ENCODE measurements at regions of chr16 and their contacts with region 1.

Region 1: GRCh38 chr16:88791755-88792550 is 6.9 kb upstream of the PIEZO1 start:
- DNase-seq: peak in 1 of 14 experiments; percentile 38
- ATAC-seq: no peak
- H3K4me3 ChIP-seq: no peak overlapping the region
- H3K4me3 Mint-ChIP-seq: peak overlapping the region; percentile 30
- H3K27ac ChIP-seq: peak overlapping the region; percentile 45 to 70
- H3K27ac Mint-ChIP-seq: peak overlapping the region; percentile 86
- H3K4me1 ChIP-seq: peaks cover 73% of the 10 kb centered on the region
- H3K4me1 Mint-ChIP-seq: peaks cover 59% of the 10 kb centered on the region
- H3K27me3 ChIP-seq: no peaks in the 10 kb centered on the region
- H3K27me3 Mint-ChIP-seq: no peaks in the 10 kb centered on the region
- CTCF ChIP-seq: no peak

Region 2: DNA sequence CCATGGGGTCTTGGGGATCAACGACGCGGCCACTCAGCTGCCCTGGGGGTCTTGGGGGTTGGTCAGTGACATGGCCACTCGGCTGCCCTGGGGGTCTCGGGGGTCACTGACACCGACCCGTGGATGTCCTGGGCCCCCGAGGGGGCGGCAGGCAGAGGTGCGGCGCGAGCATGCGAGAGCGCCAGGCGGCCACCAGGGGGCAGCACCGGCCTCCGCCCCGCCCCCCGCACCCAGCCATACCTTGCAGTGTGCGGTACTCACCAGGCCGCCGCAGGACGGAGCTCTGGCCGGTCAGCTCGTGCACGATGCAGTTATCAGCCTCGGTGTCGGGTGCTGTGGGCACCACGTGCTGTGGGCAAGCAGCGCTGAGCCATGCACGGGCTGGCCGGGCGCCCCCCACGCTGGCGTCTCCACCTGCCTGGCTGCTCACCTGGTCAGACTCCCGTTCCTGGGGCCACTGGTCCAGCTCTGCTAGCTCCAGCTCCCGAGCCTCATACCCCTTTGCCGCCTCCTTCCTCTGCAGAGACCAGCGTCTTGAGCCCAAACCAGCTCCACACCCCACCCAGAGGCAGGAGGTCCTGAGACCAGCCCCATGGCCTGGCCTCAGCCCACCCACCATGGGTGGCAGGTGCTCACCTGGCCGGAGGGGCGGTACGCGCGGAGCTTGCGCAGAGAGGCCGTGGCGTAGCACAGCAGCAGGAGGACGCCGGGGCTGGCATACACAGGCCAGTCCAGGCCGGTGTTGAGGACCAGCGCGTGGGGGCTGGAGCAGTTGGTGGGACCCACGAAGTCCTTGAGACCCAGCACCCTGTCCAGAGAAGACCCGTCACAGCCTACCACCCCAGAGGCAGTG is 54.4 kb before region 1 on chr16:
- CTCF ChIA-PET with region 1: interaction called, 16 read pairs
- POLR2A ChIA-PET with region 1: interaction called, 4 read pairs
- intact Hi-C with region 1: no loop called
- DNase-seq: peak; percentile 44 to 89 (median 72)
- ATAC-seq: peak; percentile 98
- H3K4me3 ChIP-seq: no peak overlapping the region
- H3K4me3 Mint-ChIP-seq: no peak overlapping the region
- H3K27ac ChIP-seq: no peak overlapping the region
- H3K27ac Mint-ChIP-seq: no peak overlapping the region
- H3K4me1 ChIP-seq: peaks cover 15% of the 10 kb centered on the region
- H3K4me1 Mint-ChIP-seq: no peaks in the 10 kb centered on the region
- H3K27me3 ChIP-seq: no peaks in the 10 kb centered on the region
- H3K27me3 Mint-ChIP-seq: no peaks in the 10 kb centered on the region
- CTCF ChIP-seq: peak; percentile 98

Region 3: DNA sequence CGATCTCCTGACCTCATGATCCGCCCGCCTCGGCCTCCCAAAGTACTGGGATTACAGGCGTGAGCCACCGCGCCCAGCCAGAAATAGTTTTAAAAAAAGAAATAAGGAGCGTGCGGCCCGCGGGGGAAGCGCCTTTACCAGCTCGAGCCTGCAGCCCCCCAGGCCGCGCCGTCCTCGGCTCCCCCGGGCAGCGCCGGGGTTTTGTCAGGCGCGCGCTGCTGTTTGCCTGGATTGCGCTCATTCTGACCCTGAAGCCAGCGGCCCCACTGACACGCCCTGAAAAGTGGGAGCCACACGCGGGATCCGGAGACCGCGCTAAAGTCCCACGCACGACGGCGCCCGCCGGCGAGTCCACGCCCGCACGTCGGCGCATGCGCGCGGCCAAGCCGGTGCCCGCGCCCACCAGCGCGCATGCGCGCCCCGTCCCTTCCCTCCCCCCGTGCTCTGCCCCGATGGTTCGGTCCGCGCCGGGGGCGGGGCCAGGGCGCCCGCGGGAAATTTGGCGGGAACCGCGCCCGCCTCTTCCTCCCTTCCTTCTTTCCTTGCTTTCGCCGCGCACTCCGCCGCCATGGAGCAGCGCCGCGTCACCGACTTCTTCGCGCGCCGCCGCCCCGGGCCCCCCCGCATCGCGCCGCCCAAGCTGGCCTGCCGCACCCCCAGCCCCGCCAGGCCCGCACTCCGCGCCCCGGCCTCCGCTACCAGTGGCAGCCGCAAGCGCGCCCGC is 11.5 kb after region 1 on chr16 and contains the start of gene CDT1:
- CTCF ChIA-PET with region 1: interaction called, 3 read pairs
- POLR2A ChIA-PET with region 1: interaction called, 15 read pairs
- intact Hi-C with region 1: loop called in 1 of 2 experiments (anchors 2 kb)
- DNase-seq: peak; percentile 67 to 95 (median 84)
- ATAC-seq: peak; percentile 58
- H3K4me3 ChIP-seq: peak within 1 kb of the TSS; percentile 67
- H3K4me3 Mint-ChIP-seq: peak within 1 kb of the TSS; percentile 92
- H3K27ac ChIP-seq: peak within 1 kb of the TSS; percentile 5 to 50
- H3K27ac Mint-ChIP-seq: peak within 1 kb of the TSS; percentile 86
- H3K4me1 ChIP-seq: peaks cover 39% of the 10 kb centered on the region
- H3K4me1 Mint-ChIP-seq: peaks cover 26% of the 10 kb centered on the region
- H3K27me3 ChIP-seq: no peaks in the 10 kb centered on the region
- H3K27me3 Mint-ChIP-seq: no peaks in the 10 kb centered on the region
- CTCF ChIP-seq: no peak
- total RNA-seq, gene CDT1: 0.47 to 1.0 TPM

Region 4: GRCh38 chr16:88843256-88843655 is 51.3 kb after region 1 on chr16:
- CTCF ChIA-PET with region 1: no interaction called
- POLR2A ChIA-PET with region 1: no interaction called
- intact Hi-C with region 1: no loop called
- DNase-seq: no peak
- ATAC-seq: no peak
- H3K4me3 ChIP-seq: no peak overlapping the region
- H3K4me3 Mint-ChIP-seq: no peak overlapping the region
- H3K27ac ChIP-seq: no peak overlapping the region
- H3K27ac Mint-ChIP-seq: no peak overlapping the region
- H3K4me1 ChIP-seq: no peaks in the 10 kb centered on the region
- H3K4me1 Mint-ChIP-seq: no peaks in the 10 kb centered on the region
- H3K27me3 ChIP-seq: no peaks in the 10 kb centered on the region
- H3K27me3 Mint-ChIP-seq: no peaks in the 10 kb centered on the region
- CTCF ChIP-seq: no peak

Measured in CD4-positive, alpha-beta T cell (primary cell).